GM13977 (cell line): ENCODE measurements at regions of chr19 and their contacts with region 1.

Region 1: DNA sequence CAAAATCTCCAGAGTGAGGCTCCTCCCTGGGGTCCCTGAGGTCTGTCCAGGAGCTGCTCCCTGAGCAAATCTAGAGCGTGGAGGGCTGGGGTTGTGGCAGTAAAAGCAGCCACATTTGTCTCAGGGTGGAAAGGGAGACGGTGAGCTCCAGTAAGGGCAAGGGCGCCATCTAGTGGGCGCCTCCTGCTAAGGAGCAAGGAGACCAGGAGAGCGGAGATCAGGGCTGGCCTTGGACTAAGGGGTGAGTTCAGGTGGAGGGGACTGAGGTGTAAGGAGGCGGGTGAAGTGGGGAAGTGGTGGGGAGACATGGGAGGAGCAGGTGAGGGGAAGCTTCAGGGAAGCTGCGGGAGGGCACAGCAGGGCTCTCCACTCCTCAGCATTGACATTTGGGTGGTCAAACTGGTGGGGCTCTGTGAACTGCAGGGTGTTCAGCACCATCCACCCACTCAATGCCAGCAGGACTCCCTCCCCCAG is 5.3 kb upstream of the CEACAM21 start:
- DNase-seq: peak; percentile 78
- CTCF ChIP-seq: peak; percentile 97

Region 2: GRCh38 chr19:41427647-41428480 is 142.8 kb before region 1 on chr19:
- in situ Hi-C with region 1: no loop called
- DNase-seq: no peak
- CTCF ChIP-seq: no peak

Region 3: DNA sequence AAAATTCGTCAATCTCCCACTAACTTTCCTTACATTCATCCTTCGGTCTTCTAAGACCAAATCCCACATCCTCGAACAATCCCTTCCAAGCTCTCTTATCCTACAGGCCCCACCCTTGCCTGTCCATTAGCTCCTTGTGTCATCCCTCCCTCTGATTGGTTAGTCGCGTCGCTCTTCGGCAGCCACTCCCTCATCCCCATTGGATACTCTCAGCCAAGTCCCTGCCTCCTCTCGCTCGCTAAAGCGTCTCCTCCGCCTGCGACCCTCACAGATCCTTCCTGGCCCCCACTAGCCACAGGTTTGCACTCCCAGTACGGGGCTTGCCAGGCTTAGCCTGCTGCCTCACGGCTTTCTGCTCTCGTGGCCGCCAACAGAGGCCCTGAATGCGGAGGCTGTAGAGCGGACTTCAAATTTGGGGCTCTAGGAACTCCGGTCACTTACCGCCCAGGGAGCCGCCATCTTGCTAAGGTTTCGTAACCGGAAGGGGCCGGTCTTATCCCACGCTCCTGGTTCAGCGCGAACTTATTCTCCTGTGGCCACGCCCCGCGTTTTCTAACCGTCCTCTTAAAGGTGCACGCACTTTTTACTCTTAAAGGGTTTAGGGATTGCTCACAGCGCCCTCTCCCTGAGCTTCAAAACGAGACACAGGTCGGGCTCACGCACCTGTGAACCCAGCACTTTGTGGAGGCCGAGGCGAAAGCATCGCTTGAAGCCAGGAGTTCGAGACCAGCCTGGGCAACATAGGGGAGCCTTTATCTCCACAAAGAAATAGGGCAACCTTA is 131.0 kb before region 1 on chr19 and contains the start of gene DMAC2:
- in situ Hi-C with region 1: loop called (anchors 10 kb)
- DNase-seq: peak; percentile 93
- CTCF ChIP-seq: peak; percentile 67

Region 4: DNA sequence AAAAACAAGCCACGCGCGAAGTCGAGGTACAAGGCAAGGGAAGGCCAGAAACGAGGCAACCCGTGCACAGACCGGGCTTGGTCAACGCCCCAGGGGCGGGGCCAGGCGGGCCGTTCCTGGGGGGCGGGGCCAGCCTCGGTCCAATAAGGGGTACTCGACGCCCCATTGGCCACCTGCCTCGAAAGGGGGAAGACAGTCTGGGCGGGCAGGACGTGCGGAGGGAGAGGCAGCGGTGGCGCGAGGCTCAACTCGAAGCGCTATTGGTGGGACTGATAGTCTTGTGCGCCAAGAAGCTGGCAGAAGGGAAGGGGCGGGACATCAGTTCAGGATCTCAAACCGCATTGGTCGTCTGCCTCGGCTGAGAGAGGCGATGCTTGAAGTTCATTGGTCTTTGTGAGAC is 273.9 kb after region 1 on chr19 and contains the start of gene LYPD4:
- in situ Hi-C with region 1: no loop called
- DNase-seq: no peak
- CTCF ChIP-seq: no peak